Vagina (tissue), 2 donors: ENCODE measurements at regions of chr15 and their contacts with region 1.

Region 1: DNA sequence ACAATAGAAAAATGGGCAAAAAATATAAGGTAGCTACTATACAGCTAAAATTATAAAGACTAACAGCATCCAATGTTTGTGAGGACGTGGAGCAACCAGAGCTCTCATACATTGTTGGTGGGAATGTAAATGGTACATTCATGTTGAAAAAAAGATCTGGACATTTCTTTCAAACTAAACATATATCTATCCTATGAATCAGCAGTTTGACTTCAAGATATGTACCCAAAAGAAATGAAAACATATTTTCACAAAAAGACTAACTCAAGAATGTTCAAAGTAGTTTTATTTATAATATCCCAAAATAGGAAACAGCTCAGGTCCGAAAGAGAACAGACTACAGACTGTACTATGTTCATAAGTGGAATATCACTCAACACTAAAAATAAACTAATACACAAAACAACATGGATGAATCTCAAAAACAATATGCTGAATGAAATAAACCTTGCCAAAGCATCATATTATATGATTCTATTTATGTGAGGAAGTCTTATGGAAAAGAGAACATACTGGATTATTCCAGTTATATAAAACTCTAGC is 8.8 kb upstream of the TTBK2 start:
- DNase-seq: no peak
- H3K4me3 ChIP-seq: no peak overlapping the region
- H3K27ac ChIP-seq: no peak overlapping the region
- H3K4me1 ChIP-seq: no peaks in the 10 kb centered on the region
- H3K27me3 ChIP-seq: no peaks in the 10 kb centered on the region
- CTCF ChIP-seq: no peak
- POLR2A ChIP-seq: no peak

Region 2: DNA sequence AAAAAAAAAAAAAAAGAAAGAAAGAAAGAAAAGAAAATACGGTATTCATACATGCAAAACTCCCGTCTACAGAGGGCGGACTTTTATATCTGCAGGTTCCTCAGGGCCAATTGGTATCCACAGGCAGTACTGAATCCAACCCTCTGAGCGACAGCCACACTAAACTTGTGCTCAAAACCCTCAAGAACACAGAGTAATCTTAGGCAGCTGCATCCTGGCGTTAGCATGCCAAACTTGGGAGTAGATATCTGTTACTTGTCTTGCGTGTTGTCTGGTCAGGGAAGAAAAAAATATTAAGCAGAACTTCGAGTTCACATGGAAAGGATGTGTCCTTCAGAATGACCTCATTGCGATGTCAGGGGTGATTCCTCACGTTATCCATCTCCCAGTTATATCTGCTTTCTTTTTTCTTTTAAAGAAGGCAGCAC is 421.1 kb before region 1 on chr15:
- intact Hi-C with region 1: no loop called
- DNase-seq: no peak
- H3K4me3 ChIP-seq: no peak overlapping the region
- H3K27ac ChIP-seq: no peak overlapping the region
- H3K4me1 ChIP-seq: peaks cover 22% of the 10 kb centered on the region
- H3K27me3 ChIP-seq: no peaks in the 10 kb centered on the region
- CTCF ChIP-seq: no peak
- POLR2A ChIP-seq: no peak

Region 3: DNA sequence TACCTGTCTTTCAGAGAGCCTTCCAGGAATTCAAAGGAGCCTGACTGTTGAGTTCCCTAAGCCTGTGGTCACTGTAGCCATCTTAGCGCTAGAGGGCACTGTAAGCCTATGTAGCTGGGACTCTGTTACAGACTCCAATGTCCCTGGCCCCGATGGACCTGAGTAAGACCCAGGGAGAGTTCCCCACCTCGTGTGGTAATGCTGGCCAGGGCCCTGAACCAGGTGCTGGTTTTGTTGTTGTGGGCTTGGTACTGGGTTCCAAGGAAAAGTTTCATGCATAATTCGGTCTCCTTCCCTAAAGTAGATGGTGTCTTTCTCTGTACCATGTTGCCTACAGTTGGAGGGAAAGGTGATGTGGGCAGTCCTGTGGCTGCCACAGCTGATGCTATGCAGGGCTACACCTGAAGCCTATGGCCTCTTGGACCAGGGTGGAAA is 224.9 kb before region 1 on chr15:
- intact Hi-C with region 1: loop called (anchors 5 kb)
- DNase-seq: peak; percentile 64 to 79
- H3K4me3 ChIP-seq: no peak overlapping the region
- H3K27ac ChIP-seq: no peak overlapping the region
- H3K4me1 ChIP-seq: peaks cover 20% of the 10 kb centered on the region
- H3K27me3 ChIP-seq: no peaks in the 10 kb centered on the region
- CTCF ChIP-seq: peak in 2 of 3 experiments; percentile 36 to 68
- POLR2A ChIP-seq: no peak